Gastrocnemius medialis (tissue), 4 donors: ENCODE measurements at regions of chr17 and their contacts with region 1.

Region 1: GRCh38 chr17:69428254-69428980 is 13.9 kb downstream of the MAP2K6 start:
- DNase-seq: no peak
- ATAC-seq: no peak
- H3K4me3 ChIP-seq: peak overlapping the region in 1 of 4 donors; percentile 39
- H3K27ac ChIP-seq: peak overlapping the region; percentile 63 to 82 (median 72)
- H3K4me1 ChIP-seq: peaks cover 42 to 57% of the 10 kb centered on the region in 2 donors
- H3K27me3 ChIP-seq: no peaks in the 10 kb centered on the region
- CTCF ChIP-seq: no peak
- POLR2A ChIP-seq: no peak

Region 2: GRCh38 chr17:69188065-69188464 is 240.4 kb before region 1 on chr17:
- in situ Hi-C with region 1: no loop called
- intact Hi-C with region 1: no loop called
- DNase-seq: no peak
- ATAC-seq: no peak
- H3K4me3 ChIP-seq: no peak overlapping the region
- H3K27ac ChIP-seq: no peak overlapping the region
- H3K4me1 ChIP-seq: no peaks in the 10 kb centered on the region
- H3K27me3 ChIP-seq: no peaks in the 10 kb centered on the region
- CTCF ChIP-seq: no peak
- POLR2A ChIP-seq: no peak

Region 3: GRCh38 chr17:69388822-69389442 is 39.5 kb before region 1 on chr17:
- in situ Hi-C with region 1: no loop called
- intact Hi-C with region 1: no loop called
- DNase-seq: no peak
- ATAC-seq: no peak
- H3K4me3 ChIP-seq: no peak overlapping the region
- H3K27ac ChIP-seq: no peak overlapping the region
- H3K4me1 ChIP-seq: no peaks in the 10 kb centered on the region
- H3K27me3 ChIP-seq: no peaks in the 10 kb centered on the region
- CTCF ChIP-seq: no peak
- POLR2A ChIP-seq: no peak

Region 4: GRCh38 chr17:69402052-69402451 is 26.4 kb before region 1 on chr17:
- in situ Hi-C with region 1: no loop called
- intact Hi-C with region 1: no loop called
- DNase-seq: no peak
- ATAC-seq: no peak
- H3K4me3 ChIP-seq: no peak overlapping the region
- H3K27ac ChIP-seq: no peak overlapping the region
- H3K4me1 ChIP-seq: no peaks in the 10 kb centered on the region
- H3K27me3 ChIP-seq: no peaks in the 10 kb centered on the region
- CTCF ChIP-seq: no peak
- POLR2A ChIP-seq: no peak

Region 5: GRCh38 chr17:69492410-69493071 is 64.1 kb after region 1 on chr17:
- in situ Hi-C with region 1: no loop called
- intact Hi-C with region 1: loop called (anchors 5 kb)
- DNase-seq: no peak
- ATAC-seq: peak; percentile 34 to 85
- H3K4me3 ChIP-seq: no peak overlapping the region
- H3K27ac ChIP-seq: peak overlapping the region; percentile 12 to 53 (median 28)
- H3K4me1 ChIP-seq: peaks cover 22% of the 10 kb centered on the region in 2 donors
- H3K27me3 ChIP-seq: no peaks in the 10 kb centered on the region
- CTCF ChIP-seq: no peak
- POLR2A ChIP-seq: no peak

Region 6: DNA sequence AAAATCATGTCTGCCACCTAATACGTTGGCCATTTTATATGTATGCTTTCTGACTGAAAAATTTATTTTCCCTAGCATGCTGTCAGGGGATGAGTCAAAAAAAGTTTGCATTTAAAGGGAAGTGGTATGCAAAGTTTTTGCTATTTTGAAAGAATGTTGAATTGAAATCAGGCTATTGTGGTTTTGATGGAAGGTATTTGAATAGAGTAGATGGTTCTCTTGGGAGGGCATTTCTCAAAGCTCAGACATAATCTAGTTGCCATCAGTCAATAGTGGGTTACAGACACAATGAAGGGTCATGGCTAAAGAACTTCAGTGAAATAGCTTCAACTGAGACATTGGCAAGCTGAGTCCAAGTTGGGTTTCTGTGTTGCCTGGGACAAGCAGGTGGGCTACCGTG is 88.5 kb after region 1 on chr17:
- in situ Hi-C with region 1: loop called in 1 of 4 experiments (anchors 10 kb)
- intact Hi-C with region 1: no loop called
- DNase-seq: no peak
- ATAC-seq: no peak
- H3K4me3 ChIP-seq: no peak overlapping the region
- H3K27ac ChIP-seq: peak overlapping the region in 2 of 4 donors; percentile 6 to 23
- H3K4me1 ChIP-seq: peaks cover 12 to 14% of the 10 kb centered on the region in 2 donors
- H3K27me3 ChIP-seq: no peaks in the 10 kb centered on the region
- CTCF ChIP-seq: no peak
- POLR2A ChIP-seq: no peak